ENCODE measurements at regions of chr14 and their contacts with region 1.

Region 1: DNA sequence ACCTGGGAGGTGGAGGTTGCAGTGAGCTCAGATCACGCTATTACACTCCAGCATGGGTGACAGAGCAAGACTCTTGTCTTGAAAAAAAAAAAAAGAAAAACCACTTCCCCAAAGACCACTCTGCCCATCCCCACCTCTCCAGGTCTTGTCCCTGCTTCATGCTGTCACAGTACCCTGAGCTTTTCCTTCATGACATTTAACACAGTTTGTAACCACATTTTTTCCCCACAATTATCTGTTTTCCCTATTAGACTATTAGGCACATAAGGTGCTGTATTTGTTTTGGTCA is 6.9 kb downstream of the HECTD1 start:
- DNase-seq: no peak
- ATAC-seq: no peak
- H3K4me3 ChIP-seq: no peak overlapping the region
- H3K27ac ChIP-seq: peak overlapping the region; percentile 20
- H3K4me1 ChIP-seq: peaks cover 52% of the 10 kb centered on the region
- H3K27me3 ChIP-seq: no peaks in the 10 kb centered on the region
- CTCF ChIP-seq: no peak

Region 2: GRCh38 chr14:29705801-29706200 is 1494.8 kb before region 1 on chr14:
- CTCF ChIA-PET with region 1: no interaction called
- POLR2A ChIA-PET with region 1: no interaction called
- intact Hi-C with region 1: no loop called
- DNase-seq: no peak
- ATAC-seq: no peak
- H3K4me3 ChIP-seq: no peak overlapping the region
- H3K27ac ChIP-seq: no peak overlapping the region
- H3K4me1 ChIP-seq: no peaks in the 10 kb centered on the region
- H3K27me3 ChIP-seq: no peaks in the 10 kb centered on the region
- CTCF ChIP-seq: no peak

Region 3: DNA sequence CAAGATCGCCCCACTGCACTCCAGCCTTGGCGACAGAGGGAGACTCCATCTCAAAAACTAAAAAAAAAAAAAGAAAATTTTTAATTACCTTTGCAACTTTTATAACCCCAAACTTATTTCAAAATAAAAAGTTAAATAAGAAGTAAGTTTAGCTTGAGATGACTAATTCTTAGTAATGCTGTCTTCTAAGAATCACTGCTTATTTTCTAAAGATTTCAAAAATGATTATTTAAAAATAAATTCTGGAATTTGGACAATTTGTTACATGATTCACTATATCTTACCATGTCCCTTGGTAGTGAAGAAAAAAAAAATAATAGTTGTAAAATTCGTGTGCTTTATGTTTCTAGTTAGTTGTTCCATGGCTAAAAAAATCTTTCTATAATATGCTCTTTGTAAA is 18.5 kb after region 1 on chr14:
- CTCF ChIA-PET with region 1: no interaction called
- POLR2A ChIA-PET with region 1: no interaction called
- intact Hi-C with region 1: no loop called
- DNase-seq: peak; percentile 35
- ATAC-seq: peak; percentile 67
- H3K4me3 ChIP-seq: no peak overlapping the region
- H3K27ac ChIP-seq: no peak overlapping the region
- H3K4me1 ChIP-seq: peaks cover 12% of the 10 kb centered on the region
- H3K27me3 ChIP-seq: no peaks in the 10 kb centered on the region
- CTCF ChIP-seq: no peak

Region 4: GRCh38 chr14:31243860-31244259 is 43.2 kb after region 1 on chr14:
- CTCF ChIA-PET with region 1: no interaction called
- POLR2A ChIA-PET with region 1: interaction called, 17 read pairs
- intact Hi-C with region 1: no loop called
- DNase-seq: peak; percentile 96
- ATAC-seq: peak; percentile 86
- H3K4me3 ChIP-seq: no peak overlapping the region
- H3K27ac ChIP-seq: peak overlapping the region; percentile 87
- H3K4me1 ChIP-seq: peaks cover 22% of the 10 kb centered on the region
- H3K27me3 ChIP-seq: no peaks in the 10 kb centered on the region
- CTCF ChIP-seq: no peak

Region 5: DNA sequence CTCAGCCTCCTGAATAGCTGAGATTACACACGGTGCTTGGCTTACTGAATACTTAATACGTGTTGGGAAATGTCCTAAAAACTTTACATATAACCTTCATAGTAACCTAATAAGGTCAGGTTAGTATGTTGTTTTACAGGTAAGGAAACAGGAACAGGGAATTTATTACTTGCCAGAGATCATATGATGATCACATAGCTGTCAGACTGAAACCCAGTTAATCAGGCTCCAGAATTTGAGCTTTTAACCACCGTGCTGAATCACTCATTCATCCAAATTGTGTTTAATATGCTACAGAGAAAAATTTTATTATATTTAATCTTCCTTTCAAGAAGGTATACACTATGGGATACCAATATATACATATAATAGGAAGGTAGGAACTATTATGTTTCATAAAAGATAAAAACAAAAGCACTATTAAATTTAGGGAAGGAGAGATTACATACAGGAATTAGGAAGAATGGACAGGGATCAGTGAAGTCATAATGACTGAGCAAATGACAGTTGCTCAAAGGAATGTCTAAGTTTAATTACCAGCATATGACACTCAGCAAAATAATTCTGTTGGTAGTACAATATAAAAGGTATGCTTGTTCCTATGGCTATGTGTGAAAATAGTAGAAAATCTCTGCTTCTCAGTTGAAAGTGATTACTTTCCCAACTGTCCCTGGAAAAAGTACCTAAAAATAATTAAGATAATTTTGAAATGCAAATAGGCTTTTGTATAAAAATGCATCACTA is 160.4 kb after region 1 on chr14:
- CTCF ChIA-PET with region 1: no interaction called
- POLR2A ChIA-PET with region 1: no interaction called
- intact Hi-C with region 1: no loop called
- DNase-seq: peak; percentile 75
- ATAC-seq: peak; percentile 82
- H3K4me3 ChIP-seq: no peak overlapping the region
- H3K27ac ChIP-seq: peak overlapping the region; percentile 15
- H3K4me1 ChIP-seq: peaks cover 29% of the 10 kb centered on the region
- H3K27me3 ChIP-seq: no peaks in the 10 kb centered on the region
- CTCF ChIP-seq: no peak

Measured in PC-3 (cell line).